Pancreas (tissue), 10 donors: ENCODE measurements at regions of chr16 and their contacts with region 1.

Region 1: DNA sequence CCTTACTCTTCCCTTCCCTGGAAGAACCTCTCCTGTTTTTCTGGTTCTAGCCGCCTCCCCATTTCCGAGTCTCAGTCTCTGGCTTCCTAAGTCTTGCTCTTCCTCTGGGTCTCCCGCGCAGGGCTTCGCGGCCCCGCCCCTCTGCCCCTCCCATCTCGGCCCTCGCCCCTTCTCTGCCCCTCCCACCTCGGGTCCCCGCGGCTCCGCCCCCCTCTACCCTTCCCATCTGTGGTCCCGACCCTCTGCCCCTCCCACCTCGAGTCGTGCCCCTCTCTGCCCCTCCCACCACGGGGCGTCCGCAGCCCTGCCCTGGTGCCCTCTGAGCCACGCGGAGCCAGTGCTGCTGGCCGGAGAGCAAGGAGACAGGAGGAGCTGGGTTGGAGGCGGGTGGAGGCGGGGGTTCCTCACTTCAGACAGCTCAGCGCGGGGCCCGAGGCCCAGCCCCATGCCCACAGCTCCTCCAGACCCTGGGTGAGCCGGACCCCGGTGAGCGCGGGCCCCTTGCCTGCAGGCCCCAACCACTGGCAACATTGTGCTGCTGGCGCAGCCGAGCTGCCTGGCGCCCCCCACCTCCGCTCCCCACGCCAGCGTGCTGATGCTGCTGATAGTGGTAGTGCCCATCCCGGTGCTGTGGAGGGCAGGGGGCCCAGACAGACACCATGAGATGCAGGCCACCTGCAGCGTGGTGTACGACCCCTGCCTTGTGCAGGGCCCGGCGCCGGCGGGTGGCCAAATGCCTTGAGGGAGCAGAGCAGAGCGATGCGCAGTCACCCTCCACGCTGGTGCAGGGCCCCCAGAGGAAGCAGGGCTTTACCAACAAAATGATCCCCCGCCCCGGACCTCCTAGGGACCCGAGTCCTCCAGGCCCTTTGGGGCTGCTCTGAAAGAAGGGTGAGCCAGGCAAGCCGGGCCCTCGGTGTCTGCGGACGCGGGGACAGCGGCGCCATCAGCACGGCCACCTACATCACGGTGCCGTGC is 2115.3 kb downstream of the TP53TG3F start:
- DNase-seq: peak in 2 of 6 donors; percentile 21 to 69
- ATAC-seq: no peak
- H3K4me3 ChIP-seq: no peak overlapping the region
- H3K27ac ChIP-seq: no peak overlapping the region
- H3K4me1 ChIP-seq: no peaks in the 10 kb centered on the region
- H3K27me3 ChIP-seq: no peaks in the 10 kb centered on the region
- CTCF ChIP-seq: no peak

Region 2: DNA sequence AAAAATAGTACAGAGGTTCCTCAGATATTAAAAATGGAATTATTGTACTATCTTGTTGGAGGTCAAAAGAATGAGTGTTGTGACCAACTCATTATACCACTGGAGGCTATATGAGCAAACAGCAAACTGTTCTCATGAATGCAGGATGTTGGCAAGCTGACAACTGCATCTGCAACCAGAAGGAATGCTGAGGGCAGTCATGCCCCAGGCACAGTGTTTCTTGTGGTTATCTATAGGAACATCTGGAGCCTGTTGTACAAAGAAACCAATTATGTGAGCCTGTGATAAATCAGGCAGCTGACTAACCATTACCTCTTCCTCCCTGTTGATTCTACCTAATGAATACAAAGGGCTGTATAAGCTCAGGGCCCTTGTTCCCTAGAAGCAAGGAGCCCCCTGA is 58.2 kb before region 1 on chr16:
- intact Hi-C with region 1: loop called in 1 of 3 experiments (anchors 10 kb)
- DNase-seq: no peak
- ATAC-seq: no peak
- H3K4me3 ChIP-seq: no peak overlapping the region
- H3K27ac ChIP-seq: no peak overlapping the region
- H3K4me1 ChIP-seq: no peaks in the 10 kb centered on the region
- H3K27me3 ChIP-seq: no peaks in the 10 kb centered on the region
- CTCF ChIP-seq: no peak

Region 3: GRCh38 chr16:35690413-35690812 is 115.7 kb after region 1 on chr16:
- intact Hi-C with region 1: no loop called
- DNase-seq: no peak
- ATAC-seq: no peak
- H3K4me3 ChIP-seq: no peak overlapping the region
- H3K27ac ChIP-seq: no peak overlapping the region
- H3K4me1 ChIP-seq: no peaks in the 10 kb centered on the region
- H3K27me3 ChIP-seq: no peaks in the 10 kb centered on the region
- CTCF ChIP-seq: no peak